ENCODE measurements at regions of chr11 and their contacts with region 1.

Region 1: GRCh38 chr11:14454861-14455632 is 44.6 kb downstream of the COPB1 start:
- DNase-seq: no peak

Region 2: DNA sequence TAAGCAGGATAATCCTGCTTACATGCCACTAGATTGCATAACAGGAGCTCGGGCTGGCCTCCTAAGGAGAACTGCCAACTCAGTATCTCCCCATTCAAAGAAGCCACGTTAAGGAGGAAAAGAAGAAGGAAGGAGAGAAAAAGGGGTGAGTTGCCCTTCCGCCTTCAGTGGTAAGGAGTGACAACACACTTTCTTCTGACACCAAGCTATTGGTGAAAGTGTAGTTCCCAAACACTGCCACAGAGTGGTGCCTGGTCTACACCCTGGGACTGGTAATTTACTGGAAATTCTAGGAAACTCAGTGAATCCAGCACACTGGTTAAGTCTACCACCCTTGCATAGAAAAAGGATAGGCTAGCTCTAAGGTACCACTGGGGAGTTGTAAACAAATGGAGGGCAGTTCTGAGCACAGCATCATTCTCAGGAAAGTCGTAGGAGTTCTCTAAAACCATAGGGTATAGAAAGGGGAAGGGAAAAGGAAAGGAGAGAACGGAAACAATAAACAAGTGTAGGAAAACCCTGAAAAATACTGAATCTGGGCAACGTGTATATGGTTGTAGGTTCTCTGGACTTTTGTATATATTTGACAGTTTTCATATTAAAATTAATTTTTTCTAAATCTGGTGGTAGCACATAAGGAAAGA is 154.3 kb before region 1 on chr11:
- intact Hi-C with region 1: loop called (anchors 5 to 10 kb)
- DNase-seq: no peak

Region 3: DNA sequence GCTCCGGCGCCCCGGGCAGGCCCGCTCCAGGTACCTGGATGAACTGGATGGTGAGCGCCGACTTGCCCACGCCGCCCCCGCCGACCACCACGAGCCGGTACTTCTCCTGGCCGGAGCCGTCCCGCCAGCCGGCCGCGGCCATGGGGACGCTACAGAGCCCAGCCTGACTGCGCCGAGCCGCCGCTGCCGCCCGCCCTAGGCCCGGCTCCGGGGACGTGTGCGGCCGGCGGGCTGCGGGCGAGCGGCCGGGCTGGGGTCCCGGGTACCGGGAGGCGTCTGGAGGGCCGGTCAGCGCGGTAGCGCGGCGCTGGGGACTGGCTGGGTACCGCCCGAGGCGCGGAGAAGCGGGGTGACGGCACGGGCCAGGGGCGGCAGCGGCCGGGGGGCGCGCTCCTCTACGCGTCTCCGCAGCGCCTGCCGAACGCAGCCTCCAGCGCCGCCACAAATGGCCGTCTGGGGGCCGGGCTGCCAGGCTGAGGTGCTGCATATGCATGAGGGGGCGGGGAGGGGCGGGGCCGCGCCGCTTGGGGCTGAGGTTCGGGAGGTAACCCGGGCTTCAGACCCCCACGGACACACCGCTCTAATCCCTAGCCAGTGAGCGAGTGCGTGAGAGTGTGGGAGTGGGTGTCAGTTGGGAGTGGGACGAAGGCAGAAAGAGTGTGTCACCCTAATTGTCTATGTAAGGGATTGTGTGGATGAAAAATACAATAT is 96.2 kb before region 1 on chr11 and contains the start of gene RRAS2:
- intact Hi-C with region 1: loop called in 1 of 2 experiments (anchors 10 kb)
- DNase-seq: peak; percentile 89
- total RNA-seq, gene RRAS2: 15.8 to 31.3 TPM

Region 4: GRCh38 chr11:14499554-14500180 is 44.6 kb after region 1 on chr11 and contains the start of gene COPB1:
- intact Hi-C with region 1: no loop called
- DNase-seq: peak; percentile 97
- total RNA-seq, gene COPB1: 103 to 113 TPM

Region 5: DNA sequence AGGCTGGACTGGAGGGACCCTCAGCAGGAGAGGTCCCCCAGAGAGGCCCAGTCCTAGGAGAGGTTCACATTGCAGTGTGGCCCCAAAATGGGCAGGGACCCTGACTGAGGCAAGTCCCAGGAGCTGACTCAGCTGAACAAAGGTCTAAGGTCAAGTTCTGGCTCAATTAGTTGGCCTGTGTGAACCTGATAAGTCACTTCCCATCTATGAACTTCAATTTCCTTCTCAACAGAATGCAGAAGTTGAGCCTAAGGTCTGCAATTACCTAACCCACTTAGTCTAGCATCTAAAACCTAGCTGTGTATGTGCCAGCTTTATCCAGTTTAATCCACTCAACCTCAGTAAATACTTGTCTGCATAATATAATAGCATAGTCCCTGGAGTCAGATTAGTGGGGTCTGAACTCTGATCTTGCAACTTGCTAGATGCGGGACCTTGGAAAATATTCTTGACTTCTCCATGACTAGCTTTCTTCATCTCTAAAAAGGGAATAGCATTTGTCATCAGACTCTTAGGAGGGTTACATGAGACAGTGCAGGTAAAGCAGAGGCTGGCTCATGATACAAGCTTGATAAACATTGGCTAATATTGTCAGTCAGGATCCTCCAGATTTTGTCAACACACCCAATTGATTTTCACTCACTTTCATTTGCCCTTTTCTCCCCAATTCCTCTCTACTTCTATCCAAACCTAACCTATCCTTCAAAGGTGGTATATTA is 1125.2 kb after region 1 on chr11:
- intact Hi-C with region 1: loop called in 1 of 2 experiments (anchors 10 kb)
- DNase-seq: no peak

Measured in posterior vena cava (tissue), 2 donors.